HCT116 (cell line): ENCODE measurements at regions of chr15 and their contacts with region 1.

Region 1: DNA sequence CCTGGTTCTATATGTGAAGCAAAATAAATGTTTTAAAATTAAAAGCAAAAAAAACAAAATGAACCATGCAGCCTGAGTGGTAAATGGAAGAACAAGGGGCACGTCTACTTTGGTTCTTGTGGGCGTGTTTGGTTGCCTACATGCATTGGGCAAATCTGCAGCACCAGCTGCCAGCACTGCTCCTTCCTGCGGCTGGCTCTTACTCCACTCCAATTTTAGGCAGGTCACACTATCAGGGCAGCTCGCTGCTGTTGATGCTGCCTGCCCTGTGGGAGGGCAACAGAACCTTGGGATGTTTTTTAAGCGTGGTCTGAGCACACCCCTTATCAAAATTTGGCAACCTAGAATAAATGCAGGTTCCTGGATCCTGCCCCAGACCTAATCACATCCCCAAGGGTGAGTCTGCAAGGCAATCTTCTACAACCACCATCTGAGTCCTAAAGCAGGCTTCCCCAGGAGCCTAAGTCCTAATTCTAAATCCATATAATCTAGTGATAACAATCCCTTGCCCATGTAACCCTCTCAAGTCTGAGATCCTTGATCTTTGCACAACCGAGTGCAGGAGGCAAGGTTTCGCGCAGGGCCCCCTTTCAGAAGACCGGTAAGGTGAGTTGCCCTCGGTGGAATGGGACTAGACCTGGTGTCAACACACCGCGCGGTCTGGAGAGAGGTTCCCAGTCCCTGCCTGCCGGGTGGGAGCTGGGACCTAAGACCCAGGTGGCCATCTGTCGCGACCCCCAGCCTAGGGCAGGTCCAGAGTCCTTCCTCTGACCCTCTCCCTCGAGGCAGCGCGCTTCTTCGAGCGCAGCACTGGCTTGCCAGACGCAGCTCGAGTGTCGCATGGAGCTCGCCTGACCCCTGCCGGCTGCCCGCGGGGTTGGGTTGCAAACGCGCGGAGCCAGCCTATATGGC is 15.9 kb downstream of the IVD start:
- DNase-seq: peak; percentile 32
- ATAC-seq: peak; percentile 94
- H3K4me3 ChIP-seq: no peak overlapping the region
- H3K27ac ChIP-seq: peak overlapping the region; percentile 55; the same call in 1 of the 2 replicates
- H3K4me1 ChIP-seq: peaks cover 16 to 22% of the 10 kb centered on the region in 2 experiments
- H3K27me3 ChIP-seq: no peaks in the 10 kb centered on the region
- CTCF ChIP-seq: peak; percentile 81 to 88 (median 86); a peak in 5 of 6 replicates
- POLR2A ChIP-seq: no peak
- RAD21 ChIP-seq: peak; percentile 91

Region 2: GRCh38 chr15:40307421-40308211 is 113.9 kb before region 1 on chr15 and contains the start of gene PLCB2:
- CTCF ChIA-PET with region 1: interaction called, 10 read pairs
- POLR2A ChIA-PET with region 1: no interaction called
- RAD21 ChIA-PET with region 1: no interaction called
- intact Hi-C with region 1: no loop called
- DNase-seq: no peak
- ATAC-seq: peak; percentile 52
- H3K4me3 ChIP-seq: no peak within 1 kb of the TSS
- H3K27ac ChIP-seq: no peak within 1 kb of the TSS
- H3K4me1 ChIP-seq: peaks cover 2 to 14% of the 10 kb centered on the region in 2 experiments; a peak in 1 of 4 replicates
- H3K27me3 ChIP-seq: 0 out of 2 replicates have a peak, but pooled peaks cover 6% of the 10 kb centered on the region
- CTCF ChIP-seq: peak in 2 of 3 experiments; percentile 30 to 44; a peak in 3 of 6 replicates
- POLR2A ChIP-seq: no peak
- RAD21 ChIP-seq: no peak
- total RNA-seq, gene PLCB2: 2.8 TPM

Region 3: DNA sequence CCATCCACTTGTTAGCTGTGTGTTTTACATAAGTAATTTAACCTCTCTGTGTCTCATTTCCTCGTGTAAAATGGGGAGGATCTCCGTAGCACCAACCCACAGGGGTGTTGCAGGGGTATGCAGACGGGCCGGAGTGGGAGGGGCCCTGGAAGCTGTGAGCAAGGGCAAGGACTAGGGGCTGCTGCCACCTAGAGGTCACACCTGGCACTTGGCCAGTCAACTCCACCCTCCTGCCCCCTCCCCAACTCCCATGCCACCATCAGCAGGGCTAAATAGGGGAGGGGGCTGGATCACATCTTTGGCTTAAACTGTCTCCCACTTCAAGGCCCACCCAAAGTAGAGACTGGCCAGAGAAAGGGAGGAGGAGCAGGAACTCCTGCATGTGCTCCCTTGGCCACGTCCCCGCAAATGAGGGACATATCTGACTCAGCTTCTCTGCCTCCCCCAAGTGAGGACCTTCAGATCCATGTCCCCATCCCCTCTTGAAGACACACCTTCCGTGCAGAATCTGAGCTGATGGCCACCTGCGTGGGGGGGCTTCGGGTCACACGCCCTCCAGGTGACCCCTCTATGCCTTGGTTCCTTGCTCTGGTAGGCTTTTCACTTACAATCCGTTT is 83.4 kb before region 1 on chr15:
- CTCF ChIA-PET with region 1: interaction called, 37 read pairs
- POLR2A ChIA-PET with region 1: no interaction called
- RAD21 ChIA-PET with region 1: interaction called, 3 to 7 read pairs
- intact Hi-C with region 1: loop called (anchors 1 kb)
- DNase-seq: peak; percentile 35
- ATAC-seq: peak; percentile 48
- H3K4me3 ChIP-seq: peak overlapping the region in 1 of 2 experiments; percentile 60; a peak in 2 of 4 replicates
- H3K27ac ChIP-seq: peak overlapping the region; percentile 92
- H3K4me1 ChIP-seq: peaks cover 41 to 58% of the 10 kb centered on the region in 2 experiments
- H3K27me3 ChIP-seq: no peaks in the 10 kb centered on the region
- CTCF ChIP-seq: peak in 2 of 3 experiments; percentile 86 to 90; a peak in 4 of 6 replicates
- POLR2A ChIP-seq: no peak
- RAD21 ChIP-seq: no peak

Region 4: GRCh38 chr15:40367686-40368611 is 53.6 kb before region 1 on chr15:
- CTCF ChIA-PET with region 1: interaction called, 3 read pairs
- POLR2A ChIA-PET with region 1: no interaction called
- RAD21 ChIA-PET with region 1: no interaction called
- intact Hi-C with region 1: loop called (anchors 1 kb)
- DNase-seq: peak; percentile 81
- ATAC-seq: peak; percentile 92
- H3K4me3 ChIP-seq: peak overlapping the region; percentile 17 to 40; a peak in 2 of 4 replicates
- H3K27ac ChIP-seq: peak overlapping the region; percentile 58; the same call in 1 of the 2 replicates
- H3K4me1 ChIP-seq: peaks cover 7 to 16% of the 10 kb centered on the region in 2 experiments; a peak in 3 of 4 replicates
- H3K27me3 ChIP-seq: no peaks in the 10 kb centered on the region
- CTCF ChIP-seq: peak; percentile 67 to 96 (median 78)
- POLR2A ChIP-seq: no peak
- RAD21 ChIP-seq: peak; percentile 66